Natural killer cell (primary cell): ENCODE measurements at regions of chr14 and their contacts with region 1.

Region 1: GRCh38 chr14:102694530-102695166 is 82.6 kb upstream of the TRAF3 start:
- DNase-seq: peak; percentile 22 to 83
- ATAC-seq: peak; percentile 71 to 84 (median 81)
- H3K4me3 ChIP-seq: no peak overlapping the region
- H3K4me3 Mint-ChIP-seq: no peak overlapping the region
- H3K27ac ChIP-seq: no peak overlapping the region
- H3K27ac Mint-ChIP-seq: no peak overlapping the region
- H3K4me1 ChIP-seq: no peaks in the 10 kb centered on the region
- H3K4me1 Mint-ChIP-seq: peaks cover 17 to 20% of the 10 kb centered on the region in 2 donors
- H3K27me3 ChIP-seq: no peaks in the 10 kb centered on the region
- H3K27me3 Mint-ChIP-seq: no peaks in the 10 kb centered on the region
- CTCF ChIP-seq: peak; percentile 87

Region 2: GRCh38 chr14:102683399-102684297 is 11.0 kb before region 1 on chr14:
- intact Hi-C with region 1: no loop called
- DNase-seq: no peak
- ATAC-seq: no peak
- H3K4me3 ChIP-seq: no peak overlapping the region
- H3K4me3 Mint-ChIP-seq: no peak overlapping the region
- H3K27ac ChIP-seq: no peak overlapping the region
- H3K27ac Mint-ChIP-seq: no peak overlapping the region
- H3K4me1 ChIP-seq: no peaks in the 10 kb centered on the region
- H3K4me1 Mint-ChIP-seq: peaks cover 18 to 21% of the 10 kb centered on the region in 2 donors
- H3K27me3 ChIP-seq: no peaks in the 10 kb centered on the region
- H3K27me3 Mint-ChIP-seq: no peaks in the 10 kb centered on the region
- CTCF ChIP-seq: no peak

Region 3: GRCh38 chr14:102917469-102918211 is 223.0 kb after region 1 on chr14:
- intact Hi-C with region 1: loop called (anchors 1 kb)
- DNase-seq: peak; percentile 38 to 71
- ATAC-seq: peak in 2 of 3 donors; percentile 52 to 61
- H3K4me3 ChIP-seq: no peak overlapping the region
- H3K4me3 Mint-ChIP-seq: no peak overlapping the region
- H3K27ac ChIP-seq: no peak overlapping the region
- H3K27ac Mint-ChIP-seq: no peak overlapping the region
- H3K4me1 ChIP-seq: peaks cover 18% of the 10 kb centered on the region
- H3K4me1 Mint-ChIP-seq: no peaks in the 10 kb centered on the region
- H3K27me3 ChIP-seq: peaks cover 3% of the 10 kb centered on the region
- H3K27me3 Mint-ChIP-seq: no peaks in the 10 kb centered on the region
- CTCF ChIP-seq: peak; percentile 45

Region 4: GRCh38 chr14:103002578-103003350 is 308.1 kb after region 1 on chr14:
- intact Hi-C with region 1: loop called (anchors 2 kb)
- DNase-seq: peak in 1 of 2 donors; percentile 22
- ATAC-seq: no peak
- H3K4me3 ChIP-seq: no peak overlapping the region
- H3K4me3 Mint-ChIP-seq: no peak overlapping the region
- H3K27ac ChIP-seq: no peak overlapping the region
- H3K27ac Mint-ChIP-seq: no peak overlapping the region
- H3K4me1 ChIP-seq: no peaks in the 10 kb centered on the region
- H3K4me1 Mint-ChIP-seq: no peaks in the 10 kb centered on the region
- H3K27me3 ChIP-seq: no peaks in the 10 kb centered on the region
- H3K27me3 Mint-ChIP-seq: peaks cover 0 to 7% of the 10 kb centered on the region in 2 donors
- CTCF ChIP-seq: no peak

Region 5: GRCh38 chr14:103091041-103091882 is 396.6 kb after region 1 on chr14:
- intact Hi-C with region 1: loop called (anchors 10 kb)
- DNase-seq: peak; percentile 69 to 87
- ATAC-seq: peak; percentile 89 to 90 (median 89)
- H3K4me3 ChIP-seq: peak overlapping the region; percentile 12
- H3K4me3 Mint-ChIP-seq: peak overlapping the region; percentile 62
- H3K27ac ChIP-seq: no peak overlapping the region
- H3K27ac Mint-ChIP-seq: peak overlapping the region; percentile 26 to 72
- H3K4me1 ChIP-seq: peaks cover 19% of the 10 kb centered on the region
- H3K4me1 Mint-ChIP-seq: peaks cover 0 to 5% of the 10 kb centered on the region in 2 donors
- H3K27me3 ChIP-seq: peaks cover 6% of the 10 kb centered on the region
- H3K27me3 Mint-ChIP-seq: no peaks in the 10 kb centered on the region
- CTCF ChIP-seq: peak; percentile 63

Region 6: DNA sequence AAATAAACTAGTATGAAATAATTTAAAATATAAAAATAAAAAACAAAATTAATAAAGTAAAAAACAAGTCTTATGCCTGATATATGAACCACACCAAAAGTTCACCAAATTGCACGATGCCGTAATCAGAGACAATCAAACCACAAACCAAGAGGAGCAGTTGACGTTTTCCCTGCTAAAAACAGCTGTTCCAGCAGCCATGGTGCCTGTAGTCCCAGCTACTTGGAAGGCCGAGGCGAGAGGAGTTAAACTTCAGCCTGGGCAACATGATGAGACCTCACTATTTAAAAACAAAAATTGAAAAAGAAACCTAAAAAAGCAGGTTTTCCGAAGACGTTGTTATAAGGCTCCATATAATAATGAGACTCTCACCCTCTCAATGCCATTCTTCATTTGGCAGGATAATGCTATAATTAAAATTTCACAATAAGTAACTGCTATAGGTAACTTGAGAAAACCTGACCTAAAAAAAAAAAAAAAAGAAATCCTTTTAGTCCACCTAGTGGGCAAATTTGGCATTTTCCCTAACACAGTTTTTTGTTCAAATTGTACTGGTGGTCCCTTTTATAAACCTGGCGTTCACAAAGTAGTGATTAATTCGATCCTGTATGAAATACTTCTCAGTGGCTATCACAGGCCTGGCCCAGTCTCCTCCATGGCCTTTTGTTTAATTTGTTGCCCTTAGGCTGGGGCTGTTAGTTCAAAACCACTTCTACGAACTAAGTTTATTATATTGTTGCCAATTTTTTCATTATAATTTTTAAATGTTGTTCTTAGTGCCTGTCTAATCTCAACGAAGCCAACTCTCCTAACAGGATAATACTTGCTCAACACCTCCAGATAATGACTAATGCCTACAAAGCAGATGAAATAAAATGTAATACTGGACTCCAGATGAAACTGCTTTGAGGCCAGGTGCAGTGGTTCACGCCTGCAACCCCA is 490.7 kb after region 1 on chr14:
- intact Hi-C with region 1: loop called (anchors 10 kb)
- DNase-seq: peak in 1 of 2 donors; percentile 53
- ATAC-seq: no peak
- H3K4me3 ChIP-seq: no peak overlapping the region
- H3K4me3 Mint-ChIP-seq: no peak overlapping the region
- H3K27ac ChIP-seq: no peak overlapping the region
- H3K27ac Mint-ChIP-seq: no peak overlapping the region
- H3K4me1 ChIP-seq: no peaks in the 10 kb centered on the region
- H3K4me1 Mint-ChIP-seq: peaks cover 5% of the 10 kb centered on the region in 2 donors
- H3K27me3 ChIP-seq: peaks cover 15% of the 10 kb centered on the region
- H3K27me3 Mint-ChIP-seq: peaks cover 37 to 50% of the 10 kb centered on the region in 2 donors
- CTCF ChIP-seq: peak; percentile 66